Posterior cingulate gyrus (tissue), 11 donors: ENCODE measurements at regions of chr12 and their contacts with region 1.

Region 1: GRCh38 chr12:109110988-109111495 is 5.3 kb upstream of the ACACB start:
- DNase-seq: peak; percentile 76 to 97 (median 84)

Region 2: DNA sequence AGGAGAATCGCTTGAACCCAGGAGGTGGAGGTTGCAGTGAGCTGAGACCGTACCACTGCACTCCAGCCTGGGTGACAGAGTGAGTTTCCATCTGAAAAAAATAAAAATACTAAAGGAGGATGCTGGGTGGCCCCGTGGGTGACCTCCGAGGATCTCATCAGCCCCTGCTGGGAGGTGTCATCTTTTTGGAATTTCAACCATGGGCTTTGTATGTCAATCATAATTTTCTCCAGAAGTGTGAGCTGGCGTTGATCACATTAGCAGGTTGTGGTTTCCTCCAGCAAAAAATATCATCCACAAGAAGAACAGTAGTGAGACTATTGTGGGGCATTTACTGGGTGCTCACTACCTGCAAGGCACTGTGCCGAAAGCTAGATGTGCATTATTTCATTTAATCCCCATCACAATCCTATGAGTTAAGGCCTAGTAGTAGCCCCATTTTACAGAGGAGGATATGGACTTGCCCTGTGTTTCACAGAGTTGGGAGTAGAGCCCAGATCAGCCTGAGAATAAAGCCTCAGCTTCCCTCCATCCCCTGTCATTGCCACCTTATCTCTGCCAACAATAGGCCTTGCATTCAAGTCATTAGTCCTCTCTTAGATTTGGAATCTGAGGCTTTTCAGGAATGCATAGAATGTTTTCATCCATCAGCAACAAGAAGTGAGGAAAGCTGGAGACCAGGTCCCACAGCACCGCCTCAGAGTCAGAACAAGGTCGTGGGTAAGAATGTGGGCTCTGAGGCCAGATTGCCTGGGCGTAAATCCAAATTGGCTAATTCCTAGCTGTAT is 130.0 kb before region 1 on chr12:
- intact Hi-C with region 1: no loop called
- DNase-seq: no peak

Region 3: GRCh38 chr12:109154451-109155438 is 43.7 kb after region 1 on chr12:
- intact Hi-C with region 1: loop called (anchors 5 kb)
- DNase-seq: peak; percentile 67 to 97 (median 74)

Region 4: DNA sequence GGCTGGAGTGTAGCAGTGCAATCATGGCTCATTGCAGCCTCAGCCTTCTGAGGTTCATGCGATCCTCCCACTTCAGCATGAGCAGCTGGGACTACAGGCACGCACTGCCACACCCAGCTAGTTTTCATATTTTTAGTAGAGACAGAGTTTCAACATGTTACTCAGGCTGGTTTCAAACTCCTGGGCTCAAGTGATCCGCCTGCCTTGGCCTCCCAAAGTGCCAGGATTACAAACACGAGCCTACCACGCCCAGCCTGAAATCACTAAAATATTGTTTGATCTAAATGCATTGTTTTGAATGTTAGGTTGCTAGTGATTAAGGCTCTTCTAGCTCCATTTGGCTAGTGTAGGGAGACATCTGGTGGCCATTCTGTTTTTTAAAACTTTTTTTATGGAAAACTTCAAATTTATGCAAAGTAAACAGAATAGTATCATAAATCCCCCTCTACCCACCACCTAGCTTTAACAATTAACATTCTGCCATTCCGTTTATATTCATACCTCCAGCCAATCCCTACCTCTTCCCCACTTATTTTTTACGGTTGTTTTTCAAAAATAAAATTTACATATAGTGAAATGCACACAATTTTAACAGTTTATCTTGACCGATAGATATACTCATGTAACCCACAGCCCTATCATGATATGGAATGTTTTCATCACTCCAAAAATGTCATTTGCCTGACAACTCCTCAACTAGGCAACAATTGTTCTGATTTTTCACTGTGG is 274.5 kb after region 1 on chr12:
- intact Hi-C with region 1: loop called (anchors 5 kb)
- DNase-seq: no peak